Colonic mucosa (tissue), 4 donors: ENCODE measurements at regions of chr18 and their contacts with region 1.

Region 1: GRCh38 chr18:76405681-76406356 is 89.2 kb downstream of the ZNF516 start:
- DNase-seq: peak; percentile 52
- H3K4me3 ChIP-seq: no peak overlapping the region
- H3K27ac ChIP-seq: no peak overlapping the region
- H3K4me1 ChIP-seq: no peaks in the 10 kb centered on the region
- H3K27me3 ChIP-seq: no peaks in the 10 kb centered on the region
- CTCF ChIP-seq: peak; percentile 43

Region 2: DNA sequence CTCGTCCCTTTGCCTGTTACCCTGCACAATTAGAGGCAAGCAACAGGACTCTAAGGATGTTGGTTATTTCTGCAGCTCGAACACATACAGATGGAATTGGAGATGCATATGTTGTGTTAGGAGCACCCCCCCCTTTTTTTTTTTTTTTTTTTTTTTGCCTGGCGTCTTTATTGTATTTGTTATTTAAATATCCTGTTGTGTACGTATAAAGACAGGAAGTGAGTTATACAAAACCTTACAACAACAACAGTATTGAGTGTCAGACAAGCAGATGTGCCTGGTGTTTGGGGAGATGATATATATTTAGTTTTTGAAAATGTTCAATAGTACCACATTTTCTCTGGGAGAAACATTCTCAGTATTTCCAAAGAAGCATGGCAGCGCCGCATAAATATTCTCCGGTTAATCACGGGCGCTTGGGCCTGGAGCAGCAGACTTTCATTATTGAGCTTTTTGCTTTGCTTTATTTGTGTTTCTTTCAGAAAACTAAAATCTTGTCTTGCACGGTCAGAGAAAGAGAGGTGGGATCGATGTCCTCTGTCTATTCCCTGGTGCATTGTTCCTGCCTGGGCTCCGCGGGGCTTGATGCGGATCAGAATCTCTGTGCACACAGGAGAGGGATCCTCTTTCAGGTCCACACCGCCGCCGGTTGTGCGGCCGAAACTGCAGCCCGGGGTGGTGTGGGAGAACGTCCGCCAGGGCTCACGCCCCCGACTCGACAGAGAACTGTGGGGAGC is 112.5 kb after region 1 on chr18:
- intact Hi-C with region 1: loop called (anchors 10 kb)
- DNase-seq: peak; percentile 23
- H3K4me3 ChIP-seq: peak overlapping the region; percentile 17
- H3K27ac ChIP-seq: peak overlapping the region; percentile 34
- H3K4me1 ChIP-seq: no peaks in the 10 kb centered on the region
- H3K27me3 ChIP-seq: no peaks in the 10 kb centered on the region
- CTCF ChIP-seq: no peak

Region 3: DNA sequence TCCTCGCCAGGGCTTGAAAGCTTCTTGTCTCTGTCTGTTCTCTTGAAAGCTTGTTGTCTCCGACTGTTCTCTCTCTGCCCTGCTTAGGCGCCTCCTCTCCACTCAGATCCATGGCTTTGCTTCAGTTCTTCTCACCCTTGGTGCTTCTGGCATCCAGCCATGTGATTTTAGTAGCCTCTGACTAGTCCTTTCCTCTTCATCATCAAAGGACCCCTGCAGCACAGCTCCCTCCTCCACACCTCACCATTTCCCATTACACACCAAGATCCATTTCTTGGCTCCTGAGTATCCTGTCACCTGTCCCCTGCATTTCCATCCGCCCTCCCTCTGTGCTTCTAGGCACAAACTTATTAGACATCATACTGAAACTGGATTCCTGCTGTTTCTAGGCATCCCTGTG is 475.9 kb after region 1 on chr18:
- intact Hi-C with region 1: no loop called
- DNase-seq: no peak
- H3K4me3 ChIP-seq: no peak overlapping the region
- H3K27ac ChIP-seq: no peak overlapping the region
- H3K4me1 ChIP-seq: no peaks in the 10 kb centered on the region
- H3K27me3 ChIP-seq: no peaks in the 10 kb centered on the region
- CTCF ChIP-seq: no peak